ENCODE measurements at regions of chr2 and their contacts with region 1.

Region 1: GRCh38 chr2:175203621-175204496 is 22.3 kb upstream of the ATP5MC3 start:
- DNase-seq: peak; percentile 79
- ATAC-seq: peak; percentile 98
- H3K4me3 Mint-ChIP-seq: no peak overlapping the region
- H3K27ac Mint-ChIP-seq: no peak overlapping the region
- H3K4me1 Mint-ChIP-seq: peaks cover 4% of the 10 kb centered on the region
- H3K27me3 Mint-ChIP-seq: peaks cover 10% of the 10 kb centered on the region

Region 2: DNA sequence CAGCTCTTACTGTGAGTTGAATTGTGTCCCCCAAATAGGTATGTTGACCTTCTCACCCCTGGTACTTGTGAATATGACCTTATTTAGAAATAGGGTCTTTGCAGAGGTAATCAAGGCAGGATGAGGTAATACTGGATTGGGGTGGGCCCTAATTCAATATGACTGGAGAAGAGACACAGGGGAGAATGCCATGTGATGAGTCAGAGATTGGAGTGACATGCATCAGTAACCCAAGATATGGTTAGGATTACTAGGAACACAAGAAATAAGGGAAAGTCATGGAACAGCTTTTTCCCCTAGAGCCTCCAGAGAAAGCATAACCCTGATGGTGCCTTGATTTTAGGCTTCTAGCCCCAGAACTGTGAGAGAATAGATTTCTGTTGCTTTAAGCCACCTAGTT is 14.7 kb after region 1 on chr2:
- CTCF ChIA-PET with region 1: interaction called, 14 read pairs
- POLR2A ChIA-PET with region 1: no interaction called
- intact Hi-C with region 1: no loop called
- DNase-seq: no peak
- ATAC-seq: no peak
- H3K4me3 Mint-ChIP-seq: no peak overlapping the region
- H3K27ac Mint-ChIP-seq: no peak overlapping the region
- H3K4me1 Mint-ChIP-seq: no peaks in the 10 kb centered on the region
- H3K27me3 Mint-ChIP-seq: peaks cover 26% of the 10 kb centered on the region

Region 3: GRCh38 chr2:175251425-175252041 is 47.7 kb after region 1 on chr2:
- CTCF ChIA-PET with region 1: interaction called, 35 read pairs
- POLR2A ChIA-PET with region 1: no interaction called
- intact Hi-C with region 1: loop called in 1 of 2 experiments (anchors 2 kb)
- DNase-seq: no peak
- ATAC-seq: no peak
- H3K4me3 Mint-ChIP-seq: no peak overlapping the region
- H3K27ac Mint-ChIP-seq: no peak overlapping the region
- H3K4me1 Mint-ChIP-seq: no peaks in the 10 kb centered on the region
- H3K27me3 Mint-ChIP-seq: peaks cover 22% of the 10 kb centered on the region

Region 4: GRCh38 chr2:175282290-175282689 is 78.4 kb after region 1 on chr2:
- CTCF ChIA-PET with region 1: interaction called, 62 read pairs
- POLR2A ChIA-PET with region 1: interaction called, 5 read pairs
- intact Hi-C with region 1: loop called (anchors 1 kb)
- DNase-seq: no peak
- ATAC-seq: peak; percentile 91
- H3K4me3 Mint-ChIP-seq: no peak overlapping the region
- H3K27ac Mint-ChIP-seq: no peak overlapping the region
- H3K4me1 Mint-ChIP-seq: peaks cover 4% of the 10 kb centered on the region
- H3K27me3 Mint-ChIP-seq: peaks cover 2% of the 10 kb centered on the region

Region 5: DNA sequence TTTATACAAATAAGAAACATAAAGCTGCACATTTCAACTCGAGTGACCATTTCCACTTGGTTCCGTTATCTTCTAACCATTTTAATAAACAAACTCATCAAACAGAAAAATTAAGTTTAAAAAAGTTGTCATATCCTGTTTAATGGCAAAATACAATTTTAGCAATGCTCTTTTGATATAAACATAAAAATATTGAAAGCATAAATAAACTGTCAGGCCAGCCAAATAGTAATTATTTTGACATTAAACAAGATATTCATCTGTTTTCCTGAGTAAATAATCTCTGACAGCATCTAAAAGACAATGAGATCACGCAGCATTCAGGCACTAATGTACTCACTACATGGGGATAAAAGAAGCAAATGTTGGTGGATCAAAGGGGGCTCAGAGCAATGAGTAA is 122.9 kb after region 1 on chr2:
- CTCF ChIA-PET with region 1: interaction called, 11 read pairs
- POLR2A ChIA-PET with region 1: no interaction called
- intact Hi-C with region 1: loop called in 1 of 2 experiments (anchors 5 kb)
- DNase-seq: no peak
- ATAC-seq: no peak
- H3K4me3 Mint-ChIP-seq: no peak overlapping the region
- H3K27ac Mint-ChIP-seq: no peak overlapping the region
- H3K4me1 Mint-ChIP-seq: no peaks in the 10 kb centered on the region
- H3K27me3 Mint-ChIP-seq: peaks cover 4% of the 10 kb centered on the region

Measured in activated CD4-positive, alpha-beta T cell treated with anti-CD3 and anti-CD28 coated beads for 36 hours (primary cell).